ENCODE measurements at regions of chr17 and their contacts with region 1.

Region 1: DNA sequence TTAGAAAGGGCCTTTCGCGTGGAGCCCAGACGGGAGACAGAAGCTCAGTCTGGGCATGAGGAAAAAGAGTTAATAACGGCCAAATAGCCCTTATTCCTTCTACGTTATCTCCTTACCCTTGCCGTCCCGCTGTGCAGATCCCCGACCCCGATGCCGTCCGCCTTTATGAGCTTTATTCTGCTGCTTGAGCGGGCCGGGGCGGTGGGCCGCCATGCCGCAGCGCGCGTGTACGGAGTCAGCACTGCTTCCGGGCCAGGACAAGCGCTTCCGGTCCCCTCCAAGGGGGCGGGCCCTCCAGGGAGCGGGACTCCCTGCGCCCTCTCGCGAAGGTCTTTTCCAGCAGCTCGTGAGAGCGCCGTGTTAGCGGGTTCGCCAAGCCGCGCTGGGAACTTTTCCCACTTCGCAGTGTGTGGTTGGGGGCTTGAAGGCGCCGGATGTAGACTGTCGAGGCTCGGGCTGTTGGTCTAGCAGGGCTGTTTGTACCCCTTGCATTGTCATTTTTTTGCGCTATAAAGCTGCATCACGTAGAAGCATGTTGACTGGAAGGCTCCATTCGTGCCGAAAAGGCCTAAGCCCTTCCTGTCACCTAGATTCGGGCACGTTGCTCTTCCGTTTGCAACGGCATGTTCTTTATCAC is at the start of gene TSR1:
- DNase-seq: peak; percentile 93
- H3K4me3 Mint-ChIP-seq: peak within 1 kb of the TSS; percentile 96
- H3K27ac Mint-ChIP-seq: peak within 1 kb of the TSS; percentile 94
- H3K4me1 Mint-ChIP-seq: peaks cover 8% of the 10 kb centered on the region
- H3K27me3 Mint-ChIP-seq: no peaks in the 10 kb centered on the region
- CTCF ChIP-seq: no peak
- total RNA-seq, gene TSR1: 44.3 and 61.5 TPM in 2 replicates

Region 2: GRCh38 chr17:2323629-2324314 is 12.6 kb before region 1 on chr17:
- CTCF ChIA-PET with region 1: interaction called, 5 read pairs
- POLR2A ChIA-PET with region 1: interaction called, 14 read pairs
- intact Hi-C with region 1: no loop called
- DNase-seq: no peak
- H3K4me3 Mint-ChIP-seq: no peak overlapping the region
- H3K27ac Mint-ChIP-seq: no peak overlapping the region
- H3K4me1 Mint-ChIP-seq: no peaks in the 10 kb centered on the region
- H3K27me3 Mint-ChIP-seq: no peaks in the 10 kb centered on the region
- CTCF ChIP-seq: no peak

Region 3: GRCh38 chr17:2361010-2361760 is 24.9 kb after region 1 on chr17:
- CTCF ChIA-PET with region 1: interaction called, 3 read pairs
- POLR2A ChIA-PET with region 1: interaction called, 31 read pairs
- intact Hi-C with region 1: no loop called
- DNase-seq: no peak
- H3K4me3 Mint-ChIP-seq: no peak overlapping the region
- H3K27ac Mint-ChIP-seq: peak overlapping the region; percentile 84
- H3K4me1 Mint-ChIP-seq: peaks cover 17% of the 10 kb centered on the region
- H3K27me3 Mint-ChIP-seq: no peaks in the 10 kb centered on the region
- CTCF ChIP-seq: no peak

Region 4: GRCh38 chr17:2401426-2402221 is 65.3 kb after region 1 on chr17:
- CTCF ChIA-PET with region 1: no interaction called
- POLR2A ChIA-PET with region 1: interaction called, 27 read pairs
- intact Hi-C with region 1: no loop called
- DNase-seq: peak; percentile 99
- H3K4me3 Mint-ChIP-seq: peak overlapping the region; percentile 87
- H3K27ac Mint-ChIP-seq: peak overlapping the region; percentile 99
- H3K4me1 Mint-ChIP-seq: peaks cover 49% of the 10 kb centered on the region
- H3K27me3 Mint-ChIP-seq: no peaks in the 10 kb centered on the region
- CTCF ChIP-seq: no peak

Region 5: GRCh38 chr17:2421315-2422147 is 85.2 kb after region 1 on chr17:
- CTCF ChIA-PET with region 1: interaction called, 7 read pairs
- POLR2A ChIA-PET with region 1: interaction called, 13 read pairs
- intact Hi-C with region 1: no loop called
- DNase-seq: no peak
- H3K4me3 Mint-ChIP-seq: no peak overlapping the region
- H3K27ac Mint-ChIP-seq: no peak overlapping the region
- H3K4me1 Mint-ChIP-seq: peaks cover 9% of the 10 kb centered on the region
- H3K27me3 Mint-ChIP-seq: no peaks in the 10 kb centered on the region
- CTCF ChIP-seq: no peak